Posterior vena cava (tissue), 2 donors: ENCODE measurements at regions of chr1 and their contacts with region 1.

Region 1: DNA sequence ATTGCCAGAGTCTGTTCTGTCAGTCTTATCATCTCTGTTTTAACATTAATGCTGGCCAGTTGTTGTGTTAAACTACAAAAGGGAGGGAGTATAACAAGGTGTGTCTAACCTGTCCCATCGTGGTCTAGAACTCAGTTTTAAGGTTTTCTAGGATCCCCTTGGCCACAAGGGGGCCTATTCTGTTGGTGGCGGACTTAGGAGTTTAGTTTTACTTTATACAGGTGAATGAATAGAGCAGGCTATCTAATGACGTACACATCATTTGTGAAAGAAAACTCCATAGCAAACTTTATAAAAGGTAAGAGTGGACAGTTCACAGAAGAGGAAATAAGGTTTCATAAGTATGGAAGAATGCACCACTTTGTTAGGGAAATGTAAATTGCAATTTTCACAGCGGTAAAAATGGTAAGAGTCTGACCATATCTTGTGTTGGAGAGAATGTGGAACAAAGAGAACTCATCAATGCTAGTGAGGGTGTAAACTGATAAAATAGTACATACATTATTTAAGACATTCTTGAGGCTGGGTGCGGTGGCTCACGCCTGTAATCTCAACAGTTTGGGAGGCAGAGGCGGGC is 2.5 kb upstream of the ATF6 start:
- DNase-seq: no peak

Region 2: GRCh38 chr1:161106431-161106830 is 657.2 kb before region 1 on chr1:
- intact Hi-C with region 1: loop called in 1 of 2 experiments (anchors 5 kb)
- DNase-seq: no peak